Activated CD8-positive, alpha-beta T cell treated with anti-CD3 and anti-CD28 coated beads for 36 hours (primary cell): ENCODE measurements at regions of chr3 and their contacts with region 1.

Region 1: DNA sequence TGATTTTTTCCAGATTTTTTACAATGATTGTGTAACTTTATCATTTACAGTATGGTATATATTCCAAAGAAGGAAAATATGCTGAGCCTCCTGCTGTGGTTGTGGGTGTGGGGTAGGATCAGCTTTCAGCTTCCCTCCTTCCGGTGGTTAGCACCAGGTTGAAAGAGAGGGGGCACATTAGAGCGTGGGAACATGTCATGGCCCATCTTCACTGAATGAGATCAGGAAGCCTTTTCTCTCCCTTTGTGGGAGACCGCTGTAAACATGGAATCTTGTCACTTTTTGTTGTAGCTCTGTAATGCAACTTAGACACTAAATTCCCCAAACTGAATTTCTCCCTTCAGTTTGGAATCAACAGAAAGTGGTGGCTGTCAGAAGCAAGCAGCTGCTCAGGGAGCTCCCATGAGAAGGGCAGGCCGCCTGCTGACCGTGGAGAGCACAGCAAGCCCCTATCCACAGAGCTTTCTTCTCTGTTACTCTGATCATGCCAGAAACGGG is 86.7 kb upstream of the LIMD1 start:
- DNase-seq: peak; percentile 9
- ATAC-seq: no peak
- H3K4me3 Mint-ChIP-seq: no peak overlapping the region
- H3K27ac Mint-ChIP-seq: no peak overlapping the region
- H3K4me1 Mint-ChIP-seq: peaks cover 12% of the 10 kb centered on the region
- H3K27me3 Mint-ChIP-seq: no peaks in the 10 kb centered on the region
- CTCF ChIP-seq: no peak

Region 2: GRCh38 chr3:45524565-45524964 is 16.7 kb after region 1 on chr3:
- CTCF ChIA-PET with region 1: interaction called, 18 read pairs
- POLR2A ChIA-PET with region 1: no interaction called
- intact Hi-C with region 1: no loop called
- DNase-seq: no peak
- ATAC-seq: no peak
- H3K4me3 Mint-ChIP-seq: no peak overlapping the region
- H3K27ac Mint-ChIP-seq: no peak overlapping the region
- H3K4me1 Mint-ChIP-seq: peaks cover 12% of the 10 kb centered on the region
- H3K27me3 Mint-ChIP-seq: no peaks in the 10 kb centered on the region
- CTCF ChIP-seq: no peak

Region 3: GRCh38 chr3:45546716-45547701 is 39.1 kb after region 1 on chr3:
- CTCF ChIA-PET with region 1: interaction called, 13 read pairs
- POLR2A ChIA-PET with region 1: no interaction called
- intact Hi-C with region 1: no loop called
- DNase-seq: peak; percentile 71
- ATAC-seq: peak; percentile 39
- H3K4me3 Mint-ChIP-seq: no peak overlapping the region
- H3K27ac Mint-ChIP-seq: no peak overlapping the region
- H3K4me1 Mint-ChIP-seq: peaks cover 9% of the 10 kb centered on the region
- H3K27me3 Mint-ChIP-seq: no peaks in the 10 kb centered on the region
- CTCF ChIP-seq: peak; percentile 63

Region 4: DNA sequence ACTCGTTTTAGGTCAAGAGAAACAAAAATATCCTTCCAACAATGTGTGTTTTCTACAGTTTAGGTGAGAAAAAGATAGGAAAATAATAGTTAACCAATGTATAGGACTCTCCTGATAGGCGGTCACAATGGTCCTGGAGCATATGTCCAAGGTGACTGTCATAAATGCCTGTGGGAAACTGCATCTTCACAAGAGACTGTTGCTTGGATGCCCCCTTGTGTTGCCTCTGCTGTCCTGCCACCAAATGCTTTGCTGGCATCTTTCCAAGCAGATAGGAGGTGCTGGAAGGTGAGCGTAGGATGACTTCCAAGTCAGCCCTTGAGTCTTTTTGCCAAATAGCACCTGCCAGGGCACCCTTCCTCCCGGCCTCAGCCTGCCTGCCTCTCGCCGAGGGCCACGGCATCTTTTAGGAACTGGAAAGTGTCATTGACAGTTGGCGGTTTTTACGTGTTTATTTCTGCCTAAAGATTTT is 157.3 kb after region 1 on chr3:
- CTCF ChIA-PET with region 1: interaction called, 57 read pairs
- POLR2A ChIA-PET with region 1: no interaction called
- intact Hi-C with region 1: loop called (anchors 5 kb)
- DNase-seq: peak; percentile 70
- ATAC-seq: peak; percentile 21
- H3K4me3 Mint-ChIP-seq: peak overlapping the region; percentile 75
- H3K27ac Mint-ChIP-seq: peak overlapping the region; percentile 86
- H3K4me1 Mint-ChIP-seq: peaks cover 47% of the 10 kb centered on the region
- H3K27me3 Mint-ChIP-seq: no peaks in the 10 kb centered on the region
- CTCF ChIP-seq: peak; percentile 78